ENCODE measurements at regions of chr7 and their contacts with region 1.

Region 1: DNA sequence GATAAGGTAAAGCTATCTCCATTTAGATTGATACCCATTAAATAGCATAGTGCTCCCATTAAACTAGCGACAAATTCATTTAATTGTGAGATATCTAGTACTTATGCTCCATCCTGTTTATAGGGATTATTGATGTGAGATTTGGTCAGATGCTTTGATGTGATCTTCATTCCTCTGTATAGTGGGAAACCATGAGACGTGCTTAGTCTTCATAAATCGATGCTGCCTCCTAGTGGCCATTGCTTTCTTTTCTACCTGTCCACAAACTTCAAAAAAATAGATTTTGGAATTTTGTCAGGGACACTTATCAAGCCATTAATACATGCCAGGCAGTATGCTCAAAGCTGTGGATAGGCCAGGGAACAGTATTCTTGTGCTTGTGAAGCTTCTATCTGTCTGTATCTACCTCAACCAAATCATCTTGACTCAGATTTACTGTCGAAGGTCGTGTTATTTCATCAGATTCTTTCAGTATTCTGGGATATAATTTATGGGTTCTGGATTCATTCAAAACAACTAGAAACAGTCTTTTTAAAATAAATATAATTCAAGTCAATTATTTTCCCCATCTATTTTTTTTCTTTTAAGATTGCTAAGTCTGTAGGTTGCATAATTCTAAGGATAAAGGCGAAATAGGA is 12.0 kb downstream of the LSM8 start:
- DNase-seq: no peak
- ATAC-seq: peak; percentile 68
- H3K4me3 Mint-ChIP-seq: no peak overlapping the region
- H3K27ac Mint-ChIP-seq: no peak overlapping the region
- H3K4me1 Mint-ChIP-seq: peaks cover 2% of the 10 kb centered on the region
- H3K27me3 Mint-ChIP-seq: no peaks in the 10 kb centered on the region
- CTCF ChIP-seq: peak; percentile 90

Region 2: DNA sequence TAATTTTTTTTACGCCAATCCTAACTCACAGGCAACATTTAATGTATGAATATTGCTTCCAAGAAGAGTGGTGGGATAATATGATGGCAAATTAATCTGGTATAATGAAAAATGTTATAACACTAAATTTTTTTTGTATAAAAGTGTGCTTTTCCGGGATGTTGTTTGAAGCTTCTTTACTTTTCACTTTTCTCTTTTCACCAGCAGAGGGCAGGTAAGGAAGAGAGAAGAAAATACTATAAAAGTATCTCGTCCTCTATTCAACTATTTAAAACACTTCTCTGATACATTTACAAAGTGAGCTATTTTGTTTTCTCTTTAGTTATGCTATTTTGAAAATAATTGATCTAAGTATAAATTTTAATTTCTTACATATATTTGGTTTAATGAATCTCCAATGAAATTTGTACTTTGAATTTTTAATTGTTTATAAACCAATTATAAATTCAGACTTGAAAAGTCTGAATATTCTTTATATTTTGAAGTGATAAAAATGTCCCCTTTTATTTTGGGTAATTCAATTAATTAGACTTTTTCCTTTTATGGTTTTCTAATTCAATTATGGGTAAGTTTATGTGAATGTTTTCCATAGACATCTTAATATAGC is 736.9 kb before region 1 on chr7:
- CTCF ChIA-PET with region 1: interaction called, 3 read pairs
- POLR2A ChIA-PET with region 1: no interaction called
- intact Hi-C with region 1: loop called (anchors 1 kb)
- DNase-seq: no peak
- ATAC-seq: no peak
- H3K4me3 Mint-ChIP-seq: no peak overlapping the region
- H3K27ac Mint-ChIP-seq: no peak overlapping the region
- H3K4me1 Mint-ChIP-seq: no peaks in the 10 kb centered on the region
- H3K27me3 Mint-ChIP-seq: no peaks in the 10 kb centered on the region
- CTCF ChIP-seq: no peak

Region 3: GRCh38 chr7:117750612-117751563 is 445.1 kb before region 1 on chr7:
- CTCF ChIA-PET with region 1: no interaction called
- POLR2A ChIA-PET with region 1: no interaction called
- intact Hi-C with region 1: loop called (anchors 1 kb)
- DNase-seq: no peak
- ATAC-seq: no peak
- H3K4me3 Mint-ChIP-seq: no peak overlapping the region
- H3K27ac Mint-ChIP-seq: no peak overlapping the region
- H3K4me1 Mint-ChIP-seq: no peaks in the 10 kb centered on the region
- H3K27me3 Mint-ChIP-seq: no peaks in the 10 kb centered on the region
- CTCF ChIP-seq: no peak

Region 4: DNA sequence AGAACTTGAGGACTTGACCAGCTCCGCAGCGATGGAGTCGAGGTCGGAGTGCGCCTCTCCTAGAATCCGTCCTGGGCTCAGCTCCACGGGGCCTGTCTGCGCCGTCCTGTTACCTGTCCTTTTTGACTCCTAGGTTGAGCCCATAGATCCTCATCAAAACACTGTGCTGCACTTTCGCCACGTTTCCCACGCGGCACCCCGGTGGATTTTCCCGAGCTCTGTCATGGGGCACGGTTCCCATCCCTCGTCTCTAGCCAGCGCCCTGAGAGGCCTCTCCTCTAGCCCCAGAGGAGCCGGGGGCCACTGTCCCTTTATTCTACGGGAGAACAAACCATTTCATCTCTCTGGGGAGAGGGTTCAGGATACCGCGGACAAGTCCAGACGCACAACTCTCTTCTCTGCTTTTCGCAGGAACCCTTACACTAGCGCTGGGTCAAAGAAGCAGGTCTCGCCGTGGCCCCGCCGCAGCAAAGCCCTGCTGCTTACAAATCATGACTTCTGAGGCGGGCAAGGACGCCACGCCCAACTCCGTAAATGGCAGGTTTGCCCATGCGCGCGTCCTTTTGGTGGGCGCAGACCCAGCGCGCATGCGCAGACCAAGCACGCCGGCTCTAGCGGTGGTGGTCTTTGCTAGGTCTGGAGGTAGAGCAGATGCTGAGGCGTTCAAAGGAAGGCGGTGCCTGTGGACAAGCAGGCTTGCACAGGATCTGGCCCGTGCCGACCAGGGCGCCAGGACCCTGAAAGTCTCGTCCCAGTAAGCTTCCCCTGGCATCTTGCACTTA is 18.3 kb after region 1 on chr7:
- CTCF ChIA-PET with region 1: no interaction called
- POLR2A ChIA-PET with region 1: no interaction called
- intact Hi-C with region 1: no loop called
- DNase-seq: peak; percentile 66
- ATAC-seq: peak; percentile 95
- H3K4me3 Mint-ChIP-seq: peak overlapping the region; percentile 91
- H3K27ac Mint-ChIP-seq: peak overlapping the region; percentile 80
- H3K4me1 Mint-ChIP-seq: peaks cover 13% of the 10 kb centered on the region
- H3K27me3 Mint-ChIP-seq: peaks cover 2% of the 10 kb centered on the region
- CTCF ChIP-seq: no peak

Measured in activated B cell treated with CpG ODN at 0.5 μM for 24 hours (primary cell).